ENCODE measurements at regions of chr18 and their contacts with region 1.

Region 1: GRCh38 chr18:37429791-37430190 is 135.8 kb downstream of the CELF4 start:
- DNase-seq: no peak
- ATAC-seq: no peak
- H3K4me3 ChIP-seq: no peak overlapping the region
- H3K27ac ChIP-seq: no peak overlapping the region
- H3K4me1 ChIP-seq: no peaks in the 10 kb centered on the region
- H3K27me3 ChIP-seq: no peaks in the 10 kb centered on the region
- CTCF ChIP-seq: no peak
- EP300 ChIP-seq: no peak
- POLR2A ChIP-seq: no peak
- RAD21 ChIP-seq: no peak

Region 2: DNA sequence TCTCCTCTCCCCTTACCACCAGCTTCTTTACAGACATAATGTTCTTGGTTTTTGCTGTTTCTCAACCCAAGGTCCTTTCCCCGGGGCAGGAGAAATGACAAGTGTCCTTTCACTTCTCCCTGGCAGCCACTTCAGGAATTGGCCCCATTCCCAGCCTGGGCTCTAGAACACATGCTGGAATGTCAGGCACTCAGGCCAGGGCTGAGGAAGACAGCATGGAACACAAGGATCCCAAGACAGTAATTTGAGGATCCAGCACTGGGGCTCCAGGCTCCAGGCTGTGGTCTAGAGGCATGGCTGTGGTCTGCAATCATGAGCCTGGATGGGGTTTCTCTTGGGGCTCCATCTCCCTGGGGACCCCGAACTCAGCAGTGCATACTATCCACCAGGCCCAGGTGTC is 65.6 kb before region 1 on chr18:
- CTCF ChIA-PET with region 1: no interaction called
- POLR2A ChIA-PET with region 1: no interaction called
- RAD21 ChIA-PET with region 1: no interaction called
- SMC1A ChIA-PET with region 1: no interaction called
- in situ Hi-C with region 1: no loop called
- intact Hi-C with region 1: loop called (anchors 10 kb)
- DNase-seq: no peak
- ATAC-seq: no peak
- H3K4me3 ChIP-seq: no peak overlapping the region
- H3K27ac ChIP-seq: no peak overlapping the region
- H3K4me1 ChIP-seq: no peaks in the 10 kb centered on the region
- H3K27me3 ChIP-seq: peaks cover 3 to 9% of the 10 kb centered on the region in 2 experiments; a peak in 3 of 4 replicates
- CTCF ChIP-seq: no peak
- EP300 ChIP-seq: no peak
- POLR2A ChIP-seq: no peak
- RAD21 ChIP-seq: no peak

Measured in GM12878 (cell line).